Spleen (tissue), 13 donors: ENCODE measurements at regions of chr6 and their contacts with region 1.

Region 1: GRCh38 chr6:152267967-152268845 is 369.0 kb downstream of the SYNE1 start:
- DNase-seq: no peak
- H3K4me3 ChIP-seq: no peak overlapping the region
- H3K27ac ChIP-seq: no peak overlapping the region
- H3K4me1 ChIP-seq: peaks cover 0 to 32% (median 16%) of the 10 kb centered on the region in 6 donors
- H3K27me3 ChIP-seq: no peaks in the 10 kb centered on the region
- CTCF ChIP-seq: peak in 8 of 11 experiments; percentile 13 to 56 (median 41)
- POLR2A ChIP-seq: no peak

Region 2: DNA sequence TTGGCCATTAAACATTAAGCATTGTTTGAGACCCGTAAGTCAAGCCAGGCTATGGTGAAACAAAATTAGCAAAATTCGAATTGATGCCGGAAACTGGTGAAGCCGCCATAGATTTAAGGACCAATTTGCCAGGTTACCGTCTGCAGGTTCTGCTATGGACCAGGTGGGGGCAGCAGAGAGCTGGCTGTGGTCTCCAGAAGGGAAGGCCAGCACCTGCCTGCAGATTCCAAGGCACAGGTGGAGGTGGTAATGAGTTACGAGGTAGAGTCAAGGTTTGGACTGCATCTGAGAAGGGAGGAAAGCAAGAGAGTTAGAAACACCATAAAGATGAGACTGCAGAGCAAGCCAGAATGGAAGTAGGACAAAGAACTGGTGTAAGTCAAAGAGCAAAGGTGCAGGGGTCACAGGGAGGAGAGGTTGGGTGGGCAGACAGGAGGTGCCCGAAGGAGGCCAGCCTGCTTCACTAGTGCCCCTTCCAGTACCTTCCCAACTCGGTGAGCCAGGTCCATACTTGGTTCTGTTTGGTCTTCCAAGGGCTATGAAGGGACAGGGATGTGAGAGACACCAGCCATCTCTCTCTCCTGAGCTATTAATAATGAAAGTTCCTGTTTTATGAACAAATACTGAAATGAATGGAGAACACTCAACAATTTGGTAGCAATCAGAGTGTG is 592.3 kb before region 1 on chr6:
- intact Hi-C with region 1: loop called (anchors 10 kb)
- DNase-seq: peak; percentile 82
- H3K4me3 ChIP-seq: no peak overlapping the region
- H3K27ac ChIP-seq: no peak overlapping the region
- H3K4me1 ChIP-seq: peaks cover 0 to 6% (median 2%) of the 10 kb centered on the region in 6 donors
- H3K27me3 ChIP-seq: no peaks in the 10 kb centered on the region
- CTCF ChIP-seq: peak; percentile 56 to 89 (median 77)
- POLR2A ChIP-seq: no peak

Region 3: GRCh38 chr6:151765444-151765886 is 502.7 kb before region 1 on chr6:
- intact Hi-C with region 1: loop called (anchors 5 kb)
- DNase-seq: no peak
- H3K4me3 ChIP-seq: no peak overlapping the region
- H3K27ac ChIP-seq: no peak overlapping the region
- H3K4me1 ChIP-seq: peaks cover 0 to 18% (median 12%) of the 10 kb centered on the region in 6 donors
- H3K27me3 ChIP-seq: no peaks in the 10 kb centered on the region
- CTCF ChIP-seq: peak in 10 of 11 experiments; percentile 28 to 75 (median 66)
- POLR2A ChIP-seq: no peak

Region 4: GRCh38 chr6:152160346-152160745 is 107.9 kb before region 1 on chr6:
- intact Hi-C with region 1: no loop called
- DNase-seq: no peak
- H3K4me3 ChIP-seq: no peak overlapping the region
- H3K27ac ChIP-seq: no peak overlapping the region
- H3K4me1 ChIP-seq: peaks cover 0 to 8% (median 4%) of the 10 kb centered on the region in 6 donors
- H3K27me3 ChIP-seq: no peaks in the 10 kb centered on the region
- CTCF ChIP-seq: no peak
- POLR2A ChIP-seq: no peak